ENCODE measurements at regions of chr3 and their contacts with region 1.

Region 1: GRCh38 chr3:194682694-194683310 is 2.9 kb upstream of the FAM43A start:
- DNase-seq: peak; percentile 80 to 95
- H3K4me3 ChIP-seq: no peak overlapping the region
- H3K27ac ChIP-seq: peak overlapping the region in 4 of 5 donors; percentile 23 to 64 (median 50)
- H3K4me1 ChIP-seq: peaks cover 26 to 45% (median 42%) of the 10 kb centered on the region in 4 donors
- H3K27me3 ChIP-seq: peaks cover 0 to 26% (median 7%) of the 10 kb centered on the region in 3 donors
- CTCF ChIP-seq: peak in 6 of 7 experiments; percentile 40 to 94 (median 84)
- EP300 ChIP-seq: no peak
- POLR2A ChIP-seq: no peak

Region 2: GRCh38 chr3:195106418-195106906 is 423.7 kb after region 1 on chr3:
- intact Hi-C with region 1: loop called (anchors 5 kb)
- DNase-seq: peak; percentile 70 to 90
- H3K4me3 ChIP-seq: peak overlapping the region; percentile 14 to 25 (median 20)
- H3K27ac ChIP-seq: peak overlapping the region in 1 of 5 donors; percentile 41
- H3K4me1 ChIP-seq: peaks cover 10 to 38% (median 23%) of the 10 kb centered on the region in 4 donors
- H3K27me3 ChIP-seq: no peaks in the 10 kb centered on the region
- CTCF ChIP-seq: peak in 6 of 7 experiments; percentile 80 to 100 (median 98)
- EP300 ChIP-seq: no peak
- POLR2A ChIP-seq: no peak

Region 3: DNA sequence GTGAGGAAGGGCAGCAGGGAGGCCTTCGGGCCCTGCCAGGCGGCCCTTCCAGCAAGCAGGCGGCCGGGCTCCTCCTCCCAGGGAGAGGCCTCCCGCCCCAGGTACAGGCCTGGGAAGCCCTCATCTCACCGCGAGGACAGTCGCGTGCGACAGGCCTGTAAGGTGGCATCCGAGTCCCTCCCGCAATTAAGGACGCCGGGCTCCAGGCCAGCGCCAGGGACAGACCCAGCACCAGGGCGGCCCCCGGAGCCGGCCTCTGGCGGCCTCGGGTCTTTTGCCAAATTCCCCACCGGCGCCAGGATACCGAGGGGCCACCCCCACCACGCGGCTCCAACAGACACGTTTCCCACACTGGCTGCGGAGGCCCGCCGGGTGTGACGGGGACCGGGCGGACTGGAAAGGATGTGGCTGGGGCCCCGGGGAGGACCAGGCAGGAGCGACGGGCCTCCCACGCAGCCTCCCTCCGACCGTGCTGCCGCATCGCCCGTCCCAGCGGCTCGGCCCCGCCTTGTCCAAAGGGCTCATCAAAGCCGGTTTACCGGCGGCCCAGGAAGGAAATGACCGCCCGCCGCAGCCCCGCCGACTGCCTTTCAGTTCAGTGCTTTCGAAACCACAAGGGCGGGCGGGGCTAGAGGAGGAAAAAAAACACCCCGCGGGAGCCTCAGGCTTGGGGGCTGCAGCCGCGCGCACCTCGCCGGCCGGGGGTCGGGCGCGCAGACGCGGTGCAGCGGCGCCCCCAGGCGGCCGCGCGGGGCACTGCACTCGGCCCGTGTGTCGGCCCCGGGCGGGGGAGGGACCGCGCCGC is 576.9 kb after region 1 on chr3:
- intact Hi-C with region 1: loop called (anchors 5 kb)
- DNase-seq: peak; percentile 85 to 96
- H3K4me3 ChIP-seq: peak overlapping the region; percentile 64 to 76 (median 71)
- H3K27ac ChIP-seq: peak overlapping the region; percentile 88 to 95 (median 91)
- H3K4me1 ChIP-seq: peaks cover 28 to 58% (median 41%) of the 10 kb centered on the region in 4 donors
- H3K27me3 ChIP-seq: no peaks in the 10 kb centered on the region
- CTCF ChIP-seq: peak in 4 of 7 experiments; percentile 22 to 100 (median 68)
- EP300 ChIP-seq: no peak
- POLR2A ChIP-seq: no peak

Measured in stomach (tissue), 19 donors.